ENCODE measurements at regions of chr16 and their contacts with region 1.

Region 1: DNA sequence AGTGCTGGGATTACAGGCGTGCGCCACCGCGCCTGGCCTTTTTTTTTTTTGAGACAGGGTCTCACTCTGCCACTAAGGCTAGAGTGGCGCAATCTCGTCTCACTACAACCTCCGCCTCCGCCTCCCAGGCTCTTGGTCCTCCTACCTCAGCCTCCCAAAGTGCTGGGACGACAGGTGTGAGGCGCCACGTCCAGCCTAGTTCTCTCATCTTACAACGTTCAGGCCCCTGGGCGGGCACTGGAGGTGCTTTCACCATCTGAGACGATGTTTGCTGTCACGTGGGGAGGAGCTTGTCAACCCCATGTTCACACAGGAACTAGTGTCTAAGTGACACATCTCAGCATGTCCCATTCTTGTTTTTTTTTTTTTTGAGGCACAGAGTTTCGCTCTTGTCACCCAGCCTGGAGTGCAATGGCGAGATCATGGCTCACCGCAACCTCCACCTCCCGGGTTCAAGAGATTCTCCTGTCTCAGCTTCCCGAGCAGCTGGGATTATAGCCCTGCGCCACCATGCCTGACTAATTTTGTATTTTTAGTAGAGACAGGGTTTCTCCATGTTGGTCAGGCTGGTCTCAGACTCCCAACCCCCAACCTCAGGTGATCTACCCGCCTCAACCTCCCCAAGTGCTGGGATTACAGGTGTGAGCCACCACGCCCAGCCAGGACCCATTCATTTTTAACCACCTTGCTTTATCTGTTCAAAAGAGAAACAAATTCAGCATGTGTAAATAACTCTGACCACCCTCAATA is 5.2 kb upstream of the FANCA start:
- DNase-seq: peak; percentile 69 to 78
- ATAC-seq: peak; percentile 85 to 93 (median 86)
- H3K4me3 ChIP-seq: no peak overlapping the region
- H3K4me3 Mint-ChIP-seq: peak overlapping the region; percentile 76
- H3K27ac ChIP-seq: peak overlapping the region; percentile 60
- H3K27ac Mint-ChIP-seq: peak overlapping the region; percentile 90
- H3K4me1 ChIP-seq: peaks cover 27% of the 10 kb centered on the region
- H3K4me1 Mint-ChIP-seq: peaks cover 26 to 36% of the 10 kb centered on the region in 2 donors
- H3K27me3 ChIP-seq: no peaks in the 10 kb centered on the region
- H3K27me3 Mint-ChIP-seq: no peaks in the 10 kb centered on the region
- CTCF ChIP-seq: no peak

Region 2: GRCh38 chr16:89841275-89841674 is 19.7 kb after region 1 on chr16:
- intact Hi-C with region 1: loop called (anchors 2 kb)
- DNase-seq: peak; percentile 80 to 90
- ATAC-seq: peak; percentile 74 to 86 (median 83)
- H3K4me3 ChIP-seq: no peak overlapping the region
- H3K4me3 Mint-ChIP-seq: peak overlapping the region; percentile 76
- H3K27ac ChIP-seq: no peak overlapping the region
- H3K27ac Mint-ChIP-seq: peak overlapping the region; percentile 86 to 90
- H3K4me1 ChIP-seq: peaks cover 66% of the 10 kb centered on the region
- H3K4me1 Mint-ChIP-seq: peaks cover 20 to 42% of the 10 kb centered on the region in 2 donors
- H3K27me3 ChIP-seq: no peaks in the 10 kb centered on the region
- H3K27me3 Mint-ChIP-seq: no peaks in the 10 kb centered on the region
- CTCF ChIP-seq: no peak

Region 3: GRCh38 chr16:89931305-89931896 is 109.8 kb after region 1 on chr16:
- intact Hi-C with region 1: no loop called
- DNase-seq: no peak
- ATAC-seq: no peak
- H3K4me3 ChIP-seq: no peak overlapping the region
- H3K4me3 Mint-ChIP-seq: no peak overlapping the region
- H3K27ac ChIP-seq: no peak overlapping the region
- H3K27ac Mint-ChIP-seq: no peak overlapping the region
- H3K4me1 ChIP-seq: peaks cover 5% of the 10 kb centered on the region
- H3K4me1 Mint-ChIP-seq: peaks cover 0 to 3% of the 10 kb centered on the region in 2 donors
- H3K27me3 ChIP-seq: peaks cover 15% of the 10 kb centered on the region
- H3K27me3 Mint-ChIP-seq: peaks cover 7 to 18% of the 10 kb centered on the region in 2 donors
- CTCF ChIP-seq: no peak

Measured in natural killer cell (primary cell).